PC-3 (cell line): ENCODE measurements at regions of chr10 and their contacts with region 1.

Region 1: GRCh38 chr10:52597189-52597863 is 175.3 kb downstream of the MBL2 start:
- DNase-seq: peak; percentile 52
- ATAC-seq: peak; percentile 42
- H3K4me3 ChIP-seq: peak overlapping the region; percentile 61
- H3K27ac ChIP-seq: no peak overlapping the region
- H3K4me1 ChIP-seq: peaks cover 24% of the 10 kb centered on the region
- H3K27me3 ChIP-seq: no peaks in the 10 kb centered on the region
- CTCF ChIP-seq: no peak

Region 2: DNA sequence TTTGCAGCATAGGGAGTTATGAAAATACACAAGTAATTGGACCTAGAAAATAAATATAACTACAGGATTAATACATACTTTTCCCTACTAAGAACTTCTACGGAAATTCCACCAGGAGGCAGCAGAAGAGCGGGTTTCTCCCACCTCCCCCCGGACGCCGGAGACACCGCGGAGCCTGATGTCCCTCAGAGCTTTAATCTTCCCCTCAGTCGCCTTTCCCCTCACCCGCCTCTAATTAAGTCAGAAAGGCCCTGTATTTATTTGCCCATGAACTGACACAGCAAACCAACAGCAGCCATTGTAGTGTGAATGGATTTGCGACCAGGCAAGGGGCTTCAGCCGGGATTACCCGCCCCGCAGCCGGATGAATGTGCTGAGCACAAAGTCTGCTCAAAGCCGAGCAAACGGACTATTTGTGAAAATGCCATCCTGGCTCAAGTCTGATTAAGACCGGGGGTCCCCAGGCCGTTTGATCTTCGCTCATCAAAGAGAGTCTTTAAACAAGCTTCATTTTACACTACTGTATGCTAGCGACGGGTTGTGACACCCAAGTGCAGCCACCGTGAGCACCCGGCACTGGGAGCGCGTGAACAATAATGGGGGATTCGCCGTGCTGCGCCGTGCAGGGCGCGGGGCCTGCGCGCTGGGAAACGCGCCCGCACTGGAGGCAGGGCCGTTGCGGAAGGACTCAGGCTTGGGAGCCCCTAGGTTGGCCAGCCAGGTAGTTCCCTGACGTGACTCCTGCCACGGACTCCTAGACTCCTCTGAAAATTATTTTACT is 288.9 kb before region 1 on chr10:
- CTCF ChIA-PET with region 1: interaction called, 4 read pairs
- POLR2A ChIA-PET with region 1: no interaction called
- intact Hi-C with region 1: loop called (anchors 1 kb)
- DNase-seq: peak; percentile 94
- ATAC-seq: peak; percentile 86
- H3K4me3 ChIP-seq: peak overlapping the region; percentile 55
- H3K27ac ChIP-seq: 0 out of 2 replicates have a peak overlapping the region, but pooled peaks have one; percentile 2
- H3K4me1 ChIP-seq: peaks cover 36% of the 10 kb centered on the region
- H3K27me3 ChIP-seq: no peaks in the 10 kb centered on the region
- CTCF ChIP-seq: peak; percentile 99

Region 3: GRCh38 chr10:52573347-52573746 is 24.0 kb before region 1 on chr10:
- CTCF ChIA-PET with region 1: no interaction called
- POLR2A ChIA-PET with region 1: no interaction called
- intact Hi-C with region 1: no loop called
- DNase-seq: peak; percentile 85
- ATAC-seq: peak; percentile 93
- H3K4me3 ChIP-seq: no peak overlapping the region
- H3K27ac ChIP-seq: no peak overlapping the region
- H3K4me1 ChIP-seq: peaks cover 21% of the 10 kb centered on the region
- H3K27me3 ChIP-seq: no peaks in the 10 kb centered on the region
- CTCF ChIP-seq: no peak

Region 4: DNA sequence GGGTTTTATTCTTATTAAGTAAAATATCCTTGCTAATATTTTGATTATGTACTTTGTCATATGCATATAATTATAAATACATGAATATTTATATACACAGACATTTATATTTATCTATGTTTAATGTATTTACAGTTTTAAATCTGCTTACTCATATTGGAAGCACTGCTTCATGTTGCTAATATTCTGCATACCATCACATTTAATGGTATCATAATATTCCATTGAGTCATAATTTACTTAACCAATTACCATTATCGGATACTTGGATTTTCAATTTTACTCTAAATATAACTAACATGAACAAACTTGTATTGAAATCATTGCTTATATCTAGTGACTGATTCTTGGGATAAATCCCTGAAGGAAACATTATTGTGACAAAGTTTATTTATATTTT is 20.0 kb after region 1 on chr10:
- CTCF ChIA-PET with region 1: no interaction called
- POLR2A ChIA-PET with region 1: no interaction called
- intact Hi-C with region 1: loop called (anchors 1 kb)
- DNase-seq: peak; percentile 89
- ATAC-seq: peak; percentile 85
- H3K4me3 ChIP-seq: no peak overlapping the region
- H3K27ac ChIP-seq: no peak overlapping the region
- H3K4me1 ChIP-seq: peaks cover 31% of the 10 kb centered on the region
- H3K27me3 ChIP-seq: no peaks in the 10 kb centered on the region
- CTCF ChIP-seq: no peak

Region 5: GRCh38 chr10:52632591-52632990 is 35.3 kb after region 1 on chr10:
- CTCF ChIA-PET with region 1: interaction called, 4 read pairs
- POLR2A ChIA-PET with region 1: no interaction called
- intact Hi-C with region 1: loop called (anchors 1 kb)
- DNase-seq: peak; percentile 74
- ATAC-seq: peak; percentile 77
- H3K4me3 ChIP-seq: no peak overlapping the region
- H3K27ac ChIP-seq: peak overlapping the region; percentile 46
- H3K4me1 ChIP-seq: peaks cover 22% of the 10 kb centered on the region
- H3K27me3 ChIP-seq: no peaks in the 10 kb centered on the region
- CTCF ChIP-seq: no peak